ENCODE measurements at regions of chr13 and their contacts with region 1.

Region 1: DNA sequence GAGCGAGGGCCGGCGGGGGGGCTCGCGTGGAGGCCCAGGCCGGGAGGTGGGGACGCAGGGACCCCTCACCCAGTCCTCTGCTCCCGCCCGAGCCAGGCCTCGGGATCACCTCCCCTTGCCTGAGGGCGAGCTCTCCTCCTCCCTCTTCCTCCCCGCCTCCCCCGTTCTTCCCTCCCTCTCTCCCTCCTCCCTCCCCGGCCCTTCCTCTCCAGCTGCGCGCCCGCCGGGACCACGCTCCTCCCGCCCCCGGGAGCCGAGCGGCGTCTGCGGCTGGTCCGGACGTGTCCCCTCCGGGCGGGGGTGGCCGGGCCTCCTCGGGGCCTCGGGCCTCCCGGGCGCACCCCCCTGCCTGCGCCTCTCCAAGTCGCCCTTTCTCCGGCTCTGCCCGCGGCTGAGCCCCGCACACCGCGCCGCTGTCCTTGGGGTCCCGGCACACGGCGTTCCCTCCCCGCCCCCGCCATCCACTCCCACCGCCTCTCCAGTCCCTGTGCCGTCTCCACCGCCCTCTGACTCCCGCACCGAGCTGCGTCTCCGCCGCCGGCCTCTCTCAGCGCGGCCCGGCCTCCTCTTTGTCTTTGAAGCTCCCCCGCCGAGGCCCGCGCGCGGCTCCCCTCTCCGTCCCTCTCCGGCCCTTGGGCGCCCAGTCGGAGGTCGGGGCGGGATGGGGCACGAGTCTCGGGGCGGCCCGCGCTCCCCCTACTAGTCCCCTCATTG is 5.7 kb downstream of the SOX1 start:
- DNase-seq: no peak
- ATAC-seq: no peak
- H3K4me3 ChIP-seq: no peak overlapping the region
- H3K27ac ChIP-seq: no peak overlapping the region
- H3K4me1 ChIP-seq: no peaks in the 10 kb centered on the region
- H3K27me3 ChIP-seq: no peaks in the 10 kb centered on the region
- CTCF ChIP-seq: no peak
- POLR2A ChIP-seq: no peak
- RAD21 ChIP-seq: no peak

Region 2: DNA sequence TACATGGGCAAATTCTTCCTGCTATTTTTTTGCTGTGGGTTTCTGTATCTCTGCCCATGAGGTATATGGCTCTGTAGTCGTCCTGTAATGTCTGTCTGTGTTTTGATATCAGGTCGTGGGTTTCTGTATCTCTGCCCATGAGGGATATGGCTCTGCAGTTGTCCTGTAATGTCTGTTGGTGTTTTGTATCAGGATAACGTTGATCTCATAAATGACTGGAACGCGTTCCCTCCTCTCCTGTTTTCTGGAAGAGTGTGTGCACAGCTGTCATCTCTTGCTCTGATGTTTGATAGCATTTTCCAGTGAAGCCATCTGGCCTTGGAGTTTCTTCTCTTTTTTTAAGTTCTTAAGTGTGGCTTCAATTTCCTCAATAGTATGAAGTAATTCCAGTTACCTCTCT is 51.5 kb after region 1 on chr13:
- CTCF ChIA-PET with region 1: no interaction called
- POLR2A ChIA-PET with region 1: no interaction called
- RAD21 ChIA-PET with region 1: no interaction called
- intact Hi-C with region 1: loop called (anchors 1 kb)
- DNase-seq: no peak
- ATAC-seq: no peak
- H3K4me3 ChIP-seq: no peak overlapping the region
- H3K27ac ChIP-seq: no peak overlapping the region
- H3K4me1 ChIP-seq: no peaks in the 10 kb centered on the region
- H3K27me3 ChIP-seq: peaks cover 24% of the 10 kb centered on the region
- CTCF ChIP-seq: no peak
- POLR2A ChIP-seq: no peak
- RAD21 ChIP-seq: no peak